Aorta (tissue), 5 donors: ENCODE measurements at regions of chr13 and their contacts with region 1.

Region 1: DNA sequence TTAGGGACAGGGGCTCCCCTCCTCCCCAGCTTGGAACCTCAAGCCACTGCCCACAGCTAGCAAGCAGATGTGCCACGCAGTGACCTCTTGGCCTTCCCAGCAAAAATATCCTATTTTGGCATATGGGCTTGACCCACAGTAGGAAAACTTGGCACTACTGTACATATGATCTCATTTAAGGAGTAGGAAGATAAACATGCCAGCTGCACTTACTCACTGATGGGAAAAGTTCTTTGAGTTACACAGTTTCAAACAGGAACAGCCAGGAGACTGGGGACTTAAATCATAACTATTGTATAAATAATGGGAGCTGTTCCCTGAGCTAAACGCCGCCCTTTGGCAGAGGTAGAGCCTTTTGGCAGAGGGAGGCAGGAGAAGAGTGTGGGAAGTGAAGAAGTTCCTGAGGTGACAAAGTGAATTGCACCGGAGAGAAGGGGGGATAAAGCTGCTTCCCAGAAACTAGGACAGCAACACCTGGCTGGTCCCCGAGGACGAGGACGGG is 6.1 kb downstream of the SACS start:
- DNase-seq: peak in 1 of 2 donors; percentile 64
- ATAC-seq: peak; percentile 89
- H3K4me3 ChIP-seq: no peak overlapping the region
- H3K27ac ChIP-seq: peak overlapping the region; percentile 69 to 84
- H3K4me1 ChIP-seq: no peaks in the 10 kb centered on the region
- H3K27me3 ChIP-seq: no peaks in the 10 kb centered on the region

Region 2: GRCh38 chr13:23146811-23147625 is 280.4 kb before region 1 on chr13:
- intact Hi-C with region 1: no loop called
- DNase-seq: no peak
- ATAC-seq: no peak
- H3K4me3 ChIP-seq: no peak overlapping the region
- H3K27ac ChIP-seq: no peak overlapping the region
- H3K4me1 ChIP-seq: no peaks in the 10 kb centered on the region
- H3K27me3 ChIP-seq: no peaks in the 10 kb centered on the region

Region 3: DNA sequence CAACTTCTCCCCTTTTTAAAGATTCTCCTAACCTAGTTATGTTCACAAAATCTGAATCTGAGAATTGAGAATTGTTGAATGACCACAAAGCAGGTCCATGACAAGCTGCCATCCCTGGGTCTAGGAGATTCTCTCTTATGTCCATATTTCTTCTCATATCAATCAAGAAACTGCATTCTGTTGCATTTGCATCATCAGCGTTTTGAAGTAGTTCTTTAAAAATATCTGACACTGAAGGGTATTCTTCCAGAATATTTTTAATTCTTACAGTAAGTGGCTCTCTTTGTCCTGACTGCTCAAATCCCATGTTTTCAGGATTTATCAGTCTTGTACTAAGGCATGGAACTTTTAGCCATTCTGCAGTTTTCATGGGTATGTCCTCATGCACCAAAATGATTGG is 88.2 kb before region 1 on chr13:
- intact Hi-C with region 1: no loop called
- DNase-seq: no peak
- ATAC-seq: no peak
- H3K4me3 ChIP-seq: no peak overlapping the region
- H3K27ac ChIP-seq: no peak overlapping the region
- H3K4me1 ChIP-seq: no peaks in the 10 kb centered on the region
- H3K27me3 ChIP-seq: no peaks in the 10 kb centered on the region

Region 4: GRCh38 chr13:23460309-23460708 is 32.9 kb after region 1 on chr13:
- intact Hi-C with region 1: loop called in 1 of 2 experiments (anchors 5 kb)
- DNase-seq: no peak
- ATAC-seq: no peak
- H3K4me3 ChIP-seq: no peak overlapping the region
- H3K27ac ChIP-seq: no peak overlapping the region
- H3K4me1 ChIP-seq: peaks cover 4 to 5% of the 10 kb centered on the region in 2 donors
- H3K27me3 ChIP-seq: no peaks in the 10 kb centered on the region

Region 5: GRCh38 chr13:23956106-23956505 is 528.7 kb after region 1 on chr13:
- intact Hi-C with region 1: no loop called
- DNase-seq: no peak
- ATAC-seq: no peak
- H3K4me3 ChIP-seq: no peak overlapping the region
- H3K27ac ChIP-seq: no peak overlapping the region
- H3K4me1 ChIP-seq: no peaks in the 10 kb centered on the region
- H3K27me3 ChIP-seq: no peaks in the 10 kb centered on the region